ENCODE measurements at regions of chr6 and their contacts with region 1.

Region 1: GRCh38 chr6:109455502-109456282 is at the start of gene MICAL1:
- DNase-seq: peak; percentile 75 to 90
- H3K4me3 ChIP-seq: peak within 1 kb of the TSS; percentile 77 to 79
- H3K27ac ChIP-seq: peak within 1 kb of the TSS; percentile 86
- H3K4me1 ChIP-seq: peaks cover 0 to 29% (median 26%) of the 10 kb centered on the region in 4 donors
- H3K27me3 ChIP-seq: no peaks in the 10 kb centered on the region
- CTCF ChIP-seq: peak; percentile 31 to 46

Region 2: DNA sequence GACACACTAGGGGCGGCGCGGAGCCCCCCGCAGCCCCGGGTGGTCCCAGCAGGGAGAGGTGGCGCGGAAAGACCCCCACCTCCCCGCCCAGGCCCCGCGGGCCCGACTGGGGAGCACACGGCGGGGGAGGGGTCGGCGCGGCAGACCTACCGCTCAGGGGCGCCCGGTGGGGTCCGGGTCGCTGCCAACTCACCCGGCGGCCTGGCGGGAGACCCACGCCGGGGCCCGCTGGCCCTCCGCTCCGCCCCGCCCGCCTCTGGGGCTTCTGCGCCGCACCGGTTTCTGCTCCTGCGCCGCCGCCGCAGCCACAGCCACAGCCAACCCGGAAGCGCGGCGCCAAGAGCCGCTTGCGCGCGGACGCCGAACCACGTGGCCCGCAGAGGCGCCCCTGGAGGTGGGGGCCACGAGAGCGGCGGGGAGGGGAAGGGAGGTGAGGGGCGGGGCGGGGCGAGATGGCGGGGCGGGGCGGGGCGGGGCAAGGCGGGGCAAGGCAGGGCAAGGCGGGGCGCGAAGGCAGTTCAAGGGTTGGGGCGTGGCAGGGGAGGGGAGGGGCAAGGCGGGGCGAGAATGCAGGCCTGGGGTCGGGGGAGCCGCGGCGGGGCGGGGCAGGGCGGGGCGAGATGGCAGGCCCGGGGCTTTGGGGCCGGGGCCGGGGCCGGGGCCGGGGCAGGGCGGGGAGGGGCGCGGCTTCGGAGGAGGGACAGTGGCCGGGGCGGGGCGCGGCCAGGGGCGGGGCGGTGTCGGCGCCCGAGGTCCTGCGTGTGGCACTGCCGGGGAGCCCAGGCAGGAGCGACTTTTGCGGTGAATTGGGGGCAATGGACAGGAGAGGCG is 27.4 kb after region 1 on chr6 and contains the start of gene ZBTB24:
- intact Hi-C with region 1: loop called (anchors 2 kb)
- DNase-seq: peak; percentile 86 to 95
- H3K4me3 ChIP-seq: peak within 1 kb of the TSS; percentile 99
- H3K27ac ChIP-seq: peak within 1 kb of the TSS; percentile 89 to 92
- H3K4me1 ChIP-seq: peaks cover 0 to 51% (median 31%) of the 10 kb centered on the region in 4 donors
- H3K27me3 ChIP-seq: no peaks in the 10 kb centered on the region
- CTCF ChIP-seq: no peak

Measured in tibial artery (tissue), 4 donors.